Activated B cell treated with CpG ODN at 0.5 μM for 24 hours (primary cell): ENCODE measurements at regions of chr19 and their contacts with region 1.

Region 1: GRCh38 chr19:35213663-35214632 is 14.6 kb downstream of the FAM187B start:
- DNase-seq: peak; percentile 74
- ATAC-seq: peak; percentile 75
- H3K4me3 Mint-ChIP-seq: peak overlapping the region; percentile 65
- H3K27ac Mint-ChIP-seq: peak overlapping the region; percentile 98
- H3K4me1 Mint-ChIP-seq: peaks cover 79% of the 10 kb centered on the region
- H3K27me3 Mint-ChIP-seq: no peaks in the 10 kb centered on the region
- CTCF ChIP-seq: no peak

Region 2: DNA sequence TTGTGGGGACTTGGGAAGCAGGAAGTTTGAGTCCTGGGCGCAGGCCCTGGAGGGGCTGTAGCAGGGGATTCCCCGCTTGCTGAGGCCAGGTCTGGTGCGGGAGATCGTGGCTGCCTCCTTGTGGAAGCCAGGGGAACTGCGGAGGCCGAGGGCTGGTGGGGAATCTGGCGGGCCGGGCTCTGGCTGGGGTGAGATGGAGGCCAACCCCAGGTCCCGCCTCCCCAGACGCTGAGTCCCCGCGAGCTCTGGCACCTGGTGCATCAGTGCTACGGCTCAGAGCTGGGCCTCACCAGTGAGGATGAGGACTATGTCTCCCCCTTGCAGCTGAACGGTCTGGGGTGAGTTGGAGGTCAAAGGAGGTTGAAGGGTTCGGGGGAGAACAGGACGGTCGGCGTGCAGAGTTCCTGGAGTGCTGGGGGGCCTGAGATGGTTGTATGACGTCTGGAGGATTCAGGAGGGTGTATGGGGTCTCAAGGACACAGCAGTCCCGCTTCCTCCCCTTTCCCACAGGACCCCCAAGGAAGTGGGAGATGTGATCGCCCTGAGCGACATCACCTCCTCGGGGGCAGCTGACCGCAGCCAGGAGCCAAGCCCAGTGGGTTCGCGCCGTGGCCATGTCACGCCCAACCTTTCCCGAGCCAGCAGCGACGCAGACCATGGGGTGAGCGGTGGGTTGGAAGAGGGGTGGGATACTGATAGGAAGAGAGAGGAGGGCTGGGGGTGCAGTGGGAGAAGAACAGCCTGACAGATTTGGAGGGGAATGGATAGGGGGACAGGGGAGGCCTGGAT is 200.7 kb before region 1 on chr19:
- CTCF ChIA-PET with region 1: no interaction called
- POLR2A ChIA-PET with region 1: no interaction called
- intact Hi-C with region 1: no loop called
- DNase-seq: peak; percentile 74
- ATAC-seq: peak; percentile 96
- H3K4me3 Mint-ChIP-seq: no peak overlapping the region
- H3K27ac Mint-ChIP-seq: no peak overlapping the region
- H3K4me1 Mint-ChIP-seq: peaks cover 31% of the 10 kb centered on the region
- H3K27me3 Mint-ChIP-seq: no peaks in the 10 kb centered on the region
- CTCF ChIP-seq: peak; percentile 61

Region 3: GRCh38 chr19:35114353-35115176 is 99.4 kb before region 1 on chr19:
- CTCF ChIA-PET with region 1: interaction called, 7 read pairs
- POLR2A ChIA-PET with region 1: no interaction called
- intact Hi-C with region 1: loop called (anchors 1 kb)
- DNase-seq: peak; percentile 75
- ATAC-seq: peak; percentile 89
- H3K4me3 Mint-ChIP-seq: no peak overlapping the region
- H3K27ac Mint-ChIP-seq: no peak overlapping the region
- H3K4me1 Mint-ChIP-seq: peaks cover 4% of the 10 kb centered on the region
- H3K27me3 Mint-ChIP-seq: peaks cover 7% of the 10 kb centered on the region
- CTCF ChIP-seq: peak; percentile 49

Region 4: GRCh38 chr19:35154525-35155406 is 59.2 kb before region 1 on chr19 and contains the start of gene FXYD5:
- CTCF ChIA-PET with region 1: interaction called, 6 read pairs
- POLR2A ChIA-PET with region 1: interaction called, 63 read pairs
- intact Hi-C with region 1: loop called (anchors 2 kb)
- DNase-seq: peak; percentile 55
- ATAC-seq: peak; percentile 77
- H3K4me3 Mint-ChIP-seq: peak within 1 kb of the TSS; percentile 99
- H3K27ac Mint-ChIP-seq: peak within 1 kb of the TSS; percentile 94
- H3K4me1 Mint-ChIP-seq: peaks cover 49% of the 10 kb centered on the region
- H3K27me3 Mint-ChIP-seq: no peaks in the 10 kb centered on the region
- CTCF ChIP-seq: no peak
- total RNA-seq, gene FXYD5: 103 and 125 TPM in 2 replicates

Region 5: GRCh38 chr19:35195830-35196229 is 18.1 kb before region 1 on chr19:
- CTCF ChIA-PET with region 1: interaction called, 5 read pairs
- POLR2A ChIA-PET with region 1: interaction called, 13 read pairs
- intact Hi-C with region 1: no loop called
- DNase-seq: no peak
- ATAC-seq: no peak
- H3K4me3 Mint-ChIP-seq: no peak overlapping the region
- H3K27ac Mint-ChIP-seq: no peak overlapping the region
- H3K4me1 Mint-ChIP-seq: peaks cover 8% of the 10 kb centered on the region
- H3K27me3 Mint-ChIP-seq: peaks cover 1% of the 10 kb centered on the region
- CTCF ChIP-seq: no peak

Region 6: GRCh38 chr19:35269421-35270117 is 55.6 kb after region 1 on chr19:
- CTCF ChIA-PET with region 1: interaction called, 3 read pairs
- POLR2A ChIA-PET with region 1: interaction called, 9 read pairs
- intact Hi-C with region 1: loop called (anchors 1 kb)
- DNase-seq: peak; percentile 81
- ATAC-seq: peak; percentile 70
- H3K4me3 Mint-ChIP-seq: peak overlapping the region; percentile 66
- H3K27ac Mint-ChIP-seq: peak overlapping the region; percentile 12
- H3K4me1 Mint-ChIP-seq: peaks cover 61% of the 10 kb centered on the region
- H3K27me3 Mint-ChIP-seq: no peaks in the 10 kb centered on the region
- CTCF ChIP-seq: no peak

Region 7: GRCh38 chr19:35462476-35462953 is 248.6 kb after region 1 on chr19:
- CTCF ChIA-PET with region 1: no interaction called
- POLR2A ChIA-PET with region 1: interaction called, 7 read pairs
- intact Hi-C with region 1: loop called (anchors 5 kb)
- DNase-seq: peak; percentile 35
- ATAC-seq: peak; percentile 76
- H3K4me3 Mint-ChIP-seq: peak overlapping the region; percentile 76
- H3K27ac Mint-ChIP-seq: peak overlapping the region; percentile 85
- H3K4me1 Mint-ChIP-seq: peaks cover 64% of the 10 kb centered on the region
- H3K27me3 Mint-ChIP-seq: no peaks in the 10 kb centered on the region
- CTCF ChIP-seq: no peak